Uterus (tissue), 4 donors: ENCODE measurements at regions of chr11 and their contacts with region 1.

Region 1: DNA sequence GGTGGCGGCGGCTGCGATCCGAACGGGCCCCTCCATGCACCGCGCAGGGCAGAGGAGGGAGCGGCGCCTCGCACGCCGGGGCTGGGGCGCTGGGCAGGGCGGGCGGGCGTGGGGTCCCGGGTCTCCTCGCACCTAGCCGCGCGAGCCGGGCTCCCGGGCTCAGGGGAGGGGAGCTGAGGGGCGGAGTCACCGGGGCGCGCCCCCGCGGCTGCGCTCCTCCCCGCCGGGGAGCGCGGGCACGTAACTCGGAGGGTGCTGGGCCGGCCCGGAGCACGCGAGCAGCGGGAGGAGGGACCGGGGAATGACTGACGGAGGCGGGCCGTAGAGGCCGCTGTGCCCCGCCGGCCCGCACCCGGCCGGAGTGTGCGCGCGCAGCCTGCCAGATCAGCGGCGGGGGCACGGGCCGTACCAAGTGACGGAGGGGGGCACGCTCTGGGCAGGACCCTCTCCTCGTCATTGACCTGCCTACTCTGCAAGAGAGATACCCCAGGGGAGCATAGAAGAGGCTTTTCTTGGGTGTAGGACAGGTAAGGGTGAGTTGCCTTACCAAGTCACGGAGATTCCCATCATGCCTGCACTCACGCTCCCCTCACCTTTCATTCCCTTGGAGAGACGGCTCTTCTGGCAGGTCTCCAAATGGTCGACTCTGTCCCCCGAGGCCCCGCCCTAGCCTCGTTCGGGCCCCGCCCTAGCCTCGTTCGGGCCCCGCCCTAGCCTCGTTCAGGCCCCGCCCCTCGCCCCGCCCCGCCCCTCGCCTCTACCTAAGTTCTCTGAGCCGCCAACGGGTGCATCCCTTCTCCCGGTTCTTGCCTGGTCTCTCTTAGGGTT is at the start of gene CDON:
- DNase-seq: peak; percentile 94 to 95
- H3K4me3 ChIP-seq: peak within 1 kb of the TSS; percentile 53 to 93
- H3K27ac ChIP-seq: peak within 1 kb of the TSS; percentile 81 to 86
- H3K4me1 ChIP-seq: no peaks in the 10 kb centered on the region
- H3K27me3 ChIP-seq: no peaks in the 10 kb centered on the region
- CTCF ChIP-seq: peak in 3 of 4 experiments; percentile 3 to 36 (median 34)
- POLR2A ChIP-seq: peak in 1 of 2 donors; percentile 45
- total RNA-seq, gene CDON: 38.5 to 261 (median 213) TPM

Region 2: GRCh38 chr11:125941619-125942611 is 121.0 kb before region 1 on chr11:
- intact Hi-C with region 1: loop called (anchors 10 kb)
- DNase-seq: no peak
- H3K4me3 ChIP-seq: no peak overlapping the region
- H3K27ac ChIP-seq: no peak overlapping the region
- H3K4me1 ChIP-seq: no peaks in the 10 kb centered on the region
- H3K27me3 ChIP-seq: no peaks in the 10 kb centered on the region
- CTCF ChIP-seq: peak; percentile 14 to 38 (median 26)
- POLR2A ChIP-seq: no peak